ENCODE measurements at regions of chr10 and their contacts with region 1.

Region 1: GRCh38 chr10:102764389-102765178 is 20.8 kb downstream of the WBP1L start:
- DNase-seq: no peak
- ATAC-seq: no peak
- H3K4me3 ChIP-seq: no peak overlapping the region
- H3K27ac ChIP-seq: no peak overlapping the region
- H3K4me1 ChIP-seq: peaks cover 25% of the 10 kb centered on the region
- CTCF ChIP-seq: no peak
- EP300 ChIP-seq: no peak
- POLR2A ChIP-seq: no peak
- RAD21 ChIP-seq: no peak

Region 2: DNA sequence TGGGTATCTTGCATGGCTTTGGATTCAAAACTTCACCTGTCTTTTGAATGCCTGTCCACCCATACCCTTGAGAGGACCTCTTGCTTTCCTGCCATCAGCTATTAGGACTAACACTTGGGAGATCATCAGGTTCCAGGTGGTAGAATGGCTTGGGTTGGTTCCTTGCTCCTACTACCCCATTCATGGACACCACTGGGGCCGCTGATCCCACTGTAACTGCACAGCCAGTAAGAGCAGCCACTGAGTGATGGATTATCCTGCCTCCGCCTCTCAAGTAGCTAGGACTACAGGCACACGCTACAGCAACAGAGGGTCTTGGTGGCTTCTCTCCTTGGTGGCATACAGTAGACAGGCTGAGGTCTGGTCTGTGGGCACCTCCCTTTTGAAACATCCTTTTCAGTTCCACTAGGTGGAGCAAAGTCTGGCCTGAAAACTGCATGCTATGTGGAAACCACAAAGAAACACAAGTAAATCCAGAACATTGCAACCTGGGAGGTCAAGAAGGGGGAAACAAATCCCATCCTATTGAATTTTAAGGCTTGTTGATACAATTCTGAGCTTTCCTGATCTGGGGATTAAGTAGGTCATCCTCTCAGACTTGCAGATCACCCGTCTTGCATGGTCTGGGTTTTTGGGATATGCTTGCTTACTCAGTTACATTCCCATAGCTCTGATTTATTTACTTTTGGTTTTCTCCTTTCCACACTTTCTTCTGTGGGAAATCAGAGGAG is 11.5 kb before region 1 on chr10:
- CTCF ChIA-PET with region 1: interaction called, 13 read pairs
- POLR2A ChIA-PET with region 1: no interaction called
- DNase-seq: peak; percentile 46 to 64
- ATAC-seq: peak; percentile 98
- H3K4me3 ChIP-seq: no peak overlapping the region
- H3K27ac ChIP-seq: no peak overlapping the region
- H3K4me1 ChIP-seq: peaks cover 9% of the 10 kb centered on the region
- CTCF ChIP-seq: peak; percentile 58
- EP300 ChIP-seq: no peak
- POLR2A ChIP-seq: no peak
- RAD21 ChIP-seq: peak; percentile 44 to 55; a peak in 3 of 5 replicates

Region 3: DNA sequence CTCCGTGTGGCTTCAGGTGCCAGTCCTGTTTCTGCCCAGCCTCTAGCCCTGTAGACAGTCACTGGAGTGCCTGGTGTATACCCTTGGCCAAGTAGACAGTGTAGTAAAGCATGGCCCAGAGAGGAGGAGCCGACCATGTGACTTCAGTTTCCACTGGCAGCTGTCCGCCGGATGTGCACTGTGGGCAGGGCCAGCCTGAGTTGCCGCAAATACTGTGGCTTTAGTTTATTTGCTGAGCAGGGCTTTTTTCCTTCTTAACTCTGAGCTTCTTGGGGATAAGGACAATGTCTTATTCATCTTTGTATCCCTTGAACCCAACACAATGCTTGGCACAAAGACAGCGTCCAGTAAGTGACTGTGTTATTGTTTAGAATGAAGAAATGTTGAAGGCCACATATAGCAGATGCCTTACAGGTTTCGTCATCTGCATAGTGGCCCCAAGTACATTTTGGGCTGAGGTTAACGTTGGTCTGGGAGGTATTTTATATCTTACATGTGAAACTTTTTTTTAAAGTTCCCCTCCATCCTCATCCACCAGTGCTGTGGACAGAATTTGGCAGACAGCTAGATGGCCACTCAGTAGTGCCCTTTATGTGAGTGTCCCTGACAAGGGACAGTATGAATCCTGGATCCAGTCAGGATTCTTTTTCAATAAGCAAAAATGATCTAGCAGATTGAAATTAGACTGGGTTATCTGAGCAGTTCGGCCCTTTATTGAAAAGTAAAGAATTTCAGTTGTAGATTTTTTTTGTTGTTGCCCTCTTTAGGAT is 32.0 kb after region 1 on chr10:
- CTCF ChIA-PET with region 1: no interaction called
- POLR2A ChIA-PET with region 1: no interaction called
- DNase-seq: no peak
- ATAC-seq: no peak
- H3K4me3 ChIP-seq: no peak overlapping the region
- H3K27ac ChIP-seq: no peak overlapping the region
- H3K4me1 ChIP-seq: no peaks in the 10 kb centered on the region
- CTCF ChIP-seq: no peak
- EP300 ChIP-seq: no peak
- POLR2A ChIP-seq: no peak
- RAD21 ChIP-seq: no peak